Esophagus squamous epithelium (tissue), 5 donors: ENCODE measurements at regions of chr12 and their contacts with region 1.

Region 1: GRCh38 chr12:24596768-24597388 is 352.0 kb downstream of the BCAT1 start:
- DNase-seq: no peak
- H3K4me3 ChIP-seq: no peak overlapping the region
- H3K27ac ChIP-seq: no peak overlapping the region
- H3K4me1 ChIP-seq: peaks cover 0 to 4% (median 0%) of the 10 kb centered on the region in 3 donors
- H3K27me3 ChIP-seq: no peaks in the 10 kb centered on the region
- CTCF ChIP-seq: peak in 5 of 6 experiments; percentile 49 to 67 (median 60)
- POLR2A ChIP-seq: no peak

Region 2: GRCh38 chr12:24109381-24110039 is 487.4 kb before region 1 on chr12:
- intact Hi-C with region 1: loop called (anchors 10 kb)
- DNase-seq: no peak
- H3K4me3 ChIP-seq: no peak overlapping the region
- H3K27ac ChIP-seq: no peak overlapping the region
- H3K4me1 ChIP-seq: no peaks in the 10 kb centered on the region
- H3K27me3 ChIP-seq: no peaks in the 10 kb centered on the region
- CTCF ChIP-seq: peak in 5 of 6 experiments; percentile 35 to 60 (median 39)
- POLR2A ChIP-seq: no peak

Region 3: DNA sequence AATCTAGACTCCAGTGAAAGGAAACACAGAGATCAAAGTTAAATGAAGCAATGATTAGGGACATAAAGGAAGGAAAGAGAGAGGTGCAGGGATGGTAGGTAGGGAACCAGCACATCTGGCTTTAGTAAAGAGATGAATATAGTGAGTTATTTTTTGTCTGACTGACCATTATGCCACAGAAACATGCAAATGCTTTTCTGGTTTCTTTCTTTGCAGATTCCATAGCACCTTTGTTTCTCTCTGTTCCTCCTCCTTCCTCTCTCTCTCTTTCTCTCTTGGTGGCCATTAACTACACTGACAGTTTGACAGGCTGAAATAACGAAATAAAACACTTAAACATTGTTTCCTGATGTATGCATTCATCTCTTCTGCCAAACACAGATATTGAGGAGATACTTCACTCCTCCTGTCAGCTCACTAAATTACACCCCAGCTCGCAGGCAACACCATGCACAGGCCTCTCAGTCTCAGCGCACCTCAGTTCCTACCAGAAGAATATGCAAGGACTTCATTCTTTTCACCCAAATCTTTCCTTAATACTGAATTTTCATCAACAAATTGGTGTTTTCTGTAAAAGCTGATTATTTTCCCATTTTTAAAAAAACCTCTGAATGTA is 240.6 kb before region 1 on chr12:
- intact Hi-C with region 1: loop called (anchors 10 kb)
- DNase-seq: no peak
- H3K4me3 ChIP-seq: no peak overlapping the region
- H3K27ac ChIP-seq: no peak overlapping the region
- H3K4me1 ChIP-seq: no peaks in the 10 kb centered on the region
- H3K27me3 ChIP-seq: no peaks in the 10 kb centered on the region
- CTCF ChIP-seq: no peak
- POLR2A ChIP-seq: no peak